Left ventricle myocardium inferior (tissue), 1 donor: ENCODE measurements at regions of chr19 and their contacts with region 1.

Region 1: DNA sequence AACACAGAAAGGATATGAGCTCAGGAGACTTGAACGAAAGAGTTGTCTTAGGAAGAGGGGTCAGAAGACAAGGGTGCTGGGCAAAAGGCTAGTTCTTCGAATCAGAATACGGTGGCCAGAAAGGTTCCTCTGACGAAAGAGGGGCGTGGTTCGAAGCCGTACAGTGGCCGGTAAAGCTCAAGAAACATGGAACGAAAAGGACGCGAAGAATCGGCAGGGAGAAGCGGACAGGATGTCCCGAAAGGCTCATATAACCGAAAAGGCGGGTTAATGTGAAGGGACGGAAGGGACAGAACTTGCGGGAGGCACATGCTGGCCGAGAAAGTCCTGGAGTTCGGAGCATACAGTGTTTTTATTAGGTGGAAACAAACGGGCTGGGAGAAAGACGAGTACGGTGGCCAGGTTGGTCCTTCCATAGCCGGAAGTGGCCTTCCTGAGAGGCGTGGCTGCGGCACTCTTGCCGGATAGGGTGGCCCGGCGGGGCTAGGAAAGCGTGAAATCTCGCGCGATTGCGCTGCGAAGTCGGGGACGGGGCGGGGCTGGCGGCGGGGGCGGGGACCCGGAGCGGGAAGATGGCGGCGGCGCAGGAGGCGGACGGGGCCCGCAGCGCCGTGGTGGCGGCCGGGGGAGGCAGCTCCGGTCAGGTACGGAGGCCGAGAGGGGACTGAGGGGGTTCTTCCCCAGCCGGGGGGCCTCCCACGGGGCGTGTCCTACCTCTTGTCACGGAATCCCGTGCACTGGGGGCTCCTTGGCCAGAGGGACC is at the start of gene CLPTM1:
- DNase-seq: peak; percentile 97
- H3K4me3 ChIP-seq: peak within 1 kb of the TSS; percentile 95
- H3K27ac ChIP-seq: peak within 1 kb of the TSS; percentile 99
- H3K4me1 ChIP-seq: peaks cover 76% of the 10 kb centered on the region
- H3K27me3 ChIP-seq: no peaks in the 10 kb centered on the region
- CTCF ChIP-seq: no peak
- total RNA-seq, gene CLPTM1: 89.3 TPM

Region 2: DNA sequence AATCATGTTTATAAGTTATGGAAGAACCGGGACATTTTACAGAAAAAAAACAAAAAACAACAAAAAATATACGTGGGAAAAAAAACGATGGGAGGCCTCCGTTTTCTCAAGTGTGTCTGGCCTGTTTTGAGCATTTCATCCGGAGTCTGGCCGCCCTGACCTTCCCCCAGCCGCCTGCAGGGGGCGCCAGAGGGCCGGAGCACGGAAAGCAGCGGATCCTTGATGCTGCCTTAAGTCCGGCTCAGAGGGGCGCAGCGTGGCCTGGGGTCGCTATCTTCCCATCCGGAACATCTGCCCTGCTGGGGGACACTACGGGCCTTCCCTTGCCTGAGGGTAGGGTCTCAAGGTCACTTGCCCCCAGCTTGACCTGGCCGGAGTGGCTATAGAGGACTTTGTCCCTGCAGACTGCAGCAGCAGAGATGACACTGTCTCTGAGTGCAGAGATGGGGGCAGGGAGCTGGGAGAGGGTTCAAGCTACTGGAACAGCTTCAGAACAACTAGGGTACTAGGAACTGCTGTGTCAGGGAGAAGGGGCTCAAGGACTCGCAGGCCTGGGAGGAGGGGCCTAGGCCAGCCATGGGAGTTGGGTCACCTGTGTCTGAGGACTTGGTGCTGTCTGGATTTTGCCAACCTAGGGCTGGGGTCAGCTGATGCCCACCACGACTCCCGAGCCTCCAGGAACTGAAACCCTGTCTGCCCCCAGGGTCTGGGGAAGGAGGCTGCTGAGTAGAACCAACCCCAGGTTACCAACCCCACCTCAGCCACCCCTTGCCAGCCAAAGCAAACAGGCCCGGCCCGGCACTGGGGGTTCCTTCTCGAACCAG is 51.2 kb before region 1 on chr19:
- intact Hi-C with region 1: loop called (anchors 5 kb)
- DNase-seq: peak; percentile 74
- H3K4me3 ChIP-seq: no peak overlapping the region
- H3K27ac ChIP-seq: no peak overlapping the region
- H3K4me1 ChIP-seq: peaks cover 22% of the 10 kb centered on the region
- H3K27me3 ChIP-seq: peaks cover 42% of the 10 kb centered on the region
- CTCF ChIP-seq: peak; percentile 99

Region 3: DNA sequence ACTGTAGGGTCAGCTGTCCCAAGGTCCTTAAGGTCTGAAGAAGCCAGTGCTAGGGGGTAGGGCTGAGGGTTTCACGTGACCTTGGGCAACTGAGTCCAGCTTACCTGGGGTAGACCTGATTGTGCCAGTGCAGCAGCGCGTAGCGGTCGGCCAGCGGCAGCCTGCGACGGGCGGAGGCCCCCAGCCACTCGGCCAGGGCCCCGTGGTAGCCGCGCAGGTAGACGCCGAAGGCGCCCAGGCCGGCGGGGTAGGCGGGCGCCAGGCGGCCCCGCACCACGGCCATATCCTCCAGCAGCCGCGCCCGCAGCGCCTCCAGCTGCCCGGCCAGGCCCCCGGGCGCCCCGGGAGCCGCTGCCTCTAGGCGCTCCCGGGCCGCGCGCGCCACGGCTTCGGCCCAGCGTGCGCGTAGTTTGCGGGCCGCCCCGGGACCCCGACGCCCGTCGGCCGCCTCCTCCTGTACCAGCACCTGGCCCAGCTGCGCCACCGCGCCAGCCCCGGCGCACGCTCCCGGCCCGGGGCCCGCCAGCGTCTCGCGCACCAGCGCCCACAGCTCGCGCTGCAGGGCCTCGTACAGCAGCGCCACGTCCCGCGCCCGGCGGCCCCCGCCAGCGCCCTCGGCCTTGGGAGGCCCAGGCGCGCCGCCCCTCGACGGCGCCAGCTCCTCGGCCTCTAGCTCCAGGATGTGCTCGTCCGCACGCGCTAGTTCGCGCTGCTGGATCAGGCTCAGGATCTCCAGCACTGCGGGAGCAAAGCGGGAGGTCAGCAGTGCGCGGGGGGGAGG is 279.3 kb after region 1 on chr19:
- intact Hi-C with region 1: no loop called
- DNase-seq: no peak
- H3K4me3 ChIP-seq: no peak overlapping the region
- H3K27ac ChIP-seq: no peak overlapping the region
- H3K4me1 ChIP-seq: peaks cover 9% of the 10 kb centered on the region
- H3K27me3 ChIP-seq: peaks cover 50% of the 10 kb centered on the region
- CTCF ChIP-seq: no peak